Mammary epithelial cell (primary cell): ENCODE measurements at regions of chr2 and their contacts with region 1.

Region 1: DNA sequence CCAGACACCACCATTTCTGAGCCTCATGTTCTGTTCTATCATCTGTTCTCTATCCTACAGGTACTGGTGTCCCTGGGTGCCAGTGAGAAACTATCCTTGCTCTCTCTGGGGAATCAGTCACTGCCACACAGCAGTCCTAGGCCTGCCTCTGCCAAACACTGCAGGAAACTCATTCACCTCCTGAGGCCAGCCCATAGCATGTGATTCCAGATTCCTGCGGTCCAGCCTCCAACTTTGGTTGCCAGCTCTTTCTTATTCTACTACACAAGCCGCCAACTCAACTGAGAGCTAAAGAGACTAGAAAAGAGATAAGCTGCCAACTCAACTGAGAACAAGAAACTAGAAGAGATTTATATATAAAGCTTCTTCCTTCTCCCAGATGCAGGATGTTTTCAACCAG is 8.8 kb upstream of the TTLL4 start:
- DNase-seq: peak; percentile 20
- H3K4me3 ChIP-seq: no peak overlapping the region
- H3K27ac ChIP-seq: no peak overlapping the region
- H3K4me1 ChIP-seq: no peaks in the 10 kb centered on the region
- H3K27me3 ChIP-seq: no peaks in the 10 kb centered on the region
- CTCF ChIP-seq: no peak

Region 2: DNA sequence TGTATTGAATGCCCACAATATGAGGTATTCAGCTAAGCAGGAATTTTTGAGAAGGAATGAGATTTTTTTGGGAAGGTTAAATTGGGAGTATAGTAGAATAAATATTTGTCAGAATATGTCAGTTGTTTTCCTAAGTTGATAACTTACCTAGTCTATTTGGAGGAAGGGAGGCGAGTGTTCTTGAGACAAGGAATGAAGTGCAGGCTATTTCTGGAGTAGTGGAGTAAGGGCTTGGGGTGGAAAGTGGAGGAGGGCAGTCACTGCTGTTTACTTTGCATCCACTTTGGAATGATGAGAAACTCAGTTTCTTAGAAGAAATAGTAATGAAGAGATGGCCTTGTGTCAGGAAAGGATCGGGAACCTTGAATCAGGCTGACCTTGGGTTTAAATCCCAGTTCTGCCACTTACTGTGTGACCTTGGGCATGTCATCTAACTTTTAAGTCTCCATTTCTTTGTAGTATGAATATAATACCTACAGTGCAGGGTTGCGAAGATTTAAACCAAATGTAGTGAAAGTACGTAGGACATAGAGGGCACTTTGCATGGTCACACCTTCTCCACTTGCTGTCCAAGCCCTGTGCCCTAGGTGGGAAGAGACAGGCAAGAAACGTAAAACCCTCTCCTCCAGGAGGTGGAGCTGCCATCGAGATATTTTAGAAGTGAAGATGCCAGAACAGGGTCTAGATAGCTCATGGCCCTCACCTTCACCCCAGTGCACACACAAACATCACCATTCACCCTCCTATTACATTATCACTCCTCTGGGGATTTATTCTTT is 55.0 kb after region 1 on chr2:
- CTCF ChIA-PET with region 1: no interaction called
- dilution Hi-C with region 1: loop called (anchors 5 kb)
- in situ Hi-C with region 1: no loop called
- intact Hi-C with region 1: no loop called
- DNase-seq: no peak
- H3K4me3 ChIP-seq: no peak overlapping the region
- H3K27ac ChIP-seq: no peak overlapping the region
- H3K4me1 ChIP-seq: peaks cover 22% of the 10 kb centered on the region
- H3K27me3 ChIP-seq: no peaks in the 10 kb centered on the region
- CTCF ChIP-seq: no peak

Region 3: GRCh38 chr2:218876562-218877219 is 174.9 kb after region 1 on chr2:
- CTCF ChIA-PET with region 1: no interaction called
- dilution Hi-C with region 1: no loop called
- in situ Hi-C with region 1: no loop called
- intact Hi-C with region 1: no loop called
- DNase-seq: peak; percentile 51
- H3K4me3 ChIP-seq: no peak overlapping the region
- H3K27ac ChIP-seq: no peak overlapping the region
- H3K4me1 ChIP-seq: peaks cover 13% of the 10 kb centered on the region
- H3K27me3 ChIP-seq: no peaks in the 10 kb centered on the region
- CTCF ChIP-seq: peak; percentile 98 to 99